HCT116 (cell line): ENCODE measurements at regions of chr4 and their contacts with region 1.

Region 1: GRCh38 chr4:7929118-7929951 is 10.3 kb downstream of the AFAP1 start:
- DNase-seq: peak; percentile 34
- ATAC-seq: peak; percentile 95
- H3K4me3 ChIP-seq: peak overlapping the region in 1 of 2 experiments; percentile 30; a peak in 1 of 4 replicates
- H3K27ac ChIP-seq: peak overlapping the region; percentile 1; the same call in 1 of the 2 replicates
- H3K4me1 ChIP-seq: peaks cover 23 to 30% of the 10 kb centered on the region in 2 experiments
- H3K27me3 ChIP-seq: no peaks in the 10 kb centered on the region
- CTCF ChIP-seq: peak; percentile 25 to 49 (median 44); a peak in 4 of 6 replicates
- POLR2A ChIP-seq: no peak
- RAD21 ChIP-seq: peak; percentile 73

Region 2: DNA sequence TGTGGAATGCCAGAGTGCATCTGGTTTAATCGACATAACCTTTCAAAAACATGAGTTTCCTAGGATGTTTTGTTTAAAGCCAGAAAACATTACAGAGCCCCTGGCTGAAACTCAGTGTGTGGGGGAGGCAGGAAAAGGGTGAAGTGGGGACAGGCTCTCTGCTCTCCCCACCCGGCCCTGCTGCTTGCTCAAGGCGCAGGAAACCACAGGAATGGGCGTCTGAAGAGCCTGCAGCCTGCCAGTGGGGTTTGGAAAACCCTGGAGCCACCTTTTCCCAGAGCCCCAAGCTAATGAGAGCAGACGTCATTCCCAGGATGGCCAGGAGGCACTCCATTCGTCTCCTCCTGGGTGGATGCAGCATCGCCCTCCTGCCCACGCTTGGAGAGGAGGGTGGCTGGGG is 230.3 kb before region 1 on chr4:
- CTCF ChIA-PET with region 1: no interaction called
- POLR2A ChIA-PET with region 1: no interaction called
- RAD21 ChIA-PET with region 1: no interaction called
- intact Hi-C with region 1: no loop called
- DNase-seq: no peak
- ATAC-seq: no peak
- H3K4me3 ChIP-seq: no peak overlapping the region
- H3K27ac ChIP-seq: no peak overlapping the region
- H3K4me1 ChIP-seq: peaks cover 10 to 20% of the 10 kb centered on the region in 2 experiments; a peak in 3 of 4 replicates
- H3K27me3 ChIP-seq: 0 out of 2 replicates have a peak, but pooled peaks cover 2% of the 10 kb centered on the region
- CTCF ChIP-seq: no peak
- POLR2A ChIP-seq: no peak
- RAD21 ChIP-seq: no peak

Region 3: DNA sequence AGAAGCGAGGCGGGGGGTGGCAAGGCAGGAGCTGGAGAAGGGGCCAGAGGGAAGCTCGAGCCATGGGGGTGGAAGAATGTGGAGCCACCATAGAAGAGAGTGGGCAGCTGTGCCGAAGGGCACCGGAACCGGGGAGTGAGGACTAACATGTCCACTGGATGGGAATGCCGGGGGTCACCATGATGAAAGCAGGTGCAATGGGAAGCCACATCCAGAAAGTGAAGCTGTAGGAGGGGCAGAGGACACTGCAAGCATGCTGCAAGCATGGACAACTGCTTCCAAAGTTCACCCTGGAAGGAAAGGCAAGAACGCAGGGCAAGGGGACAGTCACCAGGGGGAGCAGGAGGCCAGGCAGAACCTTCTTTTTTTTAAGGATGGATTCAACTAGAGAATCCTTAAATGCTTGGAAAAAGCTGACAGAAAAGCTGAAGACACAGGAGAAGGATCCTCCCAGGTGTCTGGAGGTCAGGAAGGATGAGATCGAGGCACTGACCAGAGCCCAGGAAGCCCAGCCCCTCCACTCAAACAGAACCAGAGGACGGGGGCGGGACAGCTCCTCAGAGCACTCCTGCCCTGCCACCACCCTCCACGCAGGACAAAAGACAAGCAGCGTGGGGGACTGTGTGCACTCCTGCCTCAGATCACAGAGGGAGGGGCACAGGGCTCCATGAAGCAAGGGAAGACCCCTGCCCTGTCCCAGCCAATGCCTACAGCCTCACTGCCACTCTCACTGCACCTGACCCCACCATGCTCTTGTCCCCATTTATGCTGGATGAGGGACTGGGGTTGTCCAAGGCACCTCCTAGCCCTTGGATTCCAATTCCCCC is 158.9 kb before region 1 on chr4:
- CTCF ChIA-PET with region 1: no interaction called
- POLR2A ChIA-PET with region 1: no interaction called
- RAD21 ChIA-PET with region 1: no interaction called
- intact Hi-C with region 1: loop called (anchors 1 kb)
- DNase-seq: no peak
- ATAC-seq: peak; percentile 73
- H3K4me3 ChIP-seq: no peak overlapping the region
- H3K27ac ChIP-seq: no peak overlapping the region
- H3K4me1 ChIP-seq: no peaks in the 10 kb centered on the region
- H3K27me3 ChIP-seq: no peaks in the 10 kb centered on the region
- CTCF ChIP-seq: peak; percentile 46 to 65 (median 62); a peak in 5 of 6 replicates
- POLR2A ChIP-seq: no peak
- RAD21 ChIP-seq: peak; percentile 56

Region 4: DNA sequence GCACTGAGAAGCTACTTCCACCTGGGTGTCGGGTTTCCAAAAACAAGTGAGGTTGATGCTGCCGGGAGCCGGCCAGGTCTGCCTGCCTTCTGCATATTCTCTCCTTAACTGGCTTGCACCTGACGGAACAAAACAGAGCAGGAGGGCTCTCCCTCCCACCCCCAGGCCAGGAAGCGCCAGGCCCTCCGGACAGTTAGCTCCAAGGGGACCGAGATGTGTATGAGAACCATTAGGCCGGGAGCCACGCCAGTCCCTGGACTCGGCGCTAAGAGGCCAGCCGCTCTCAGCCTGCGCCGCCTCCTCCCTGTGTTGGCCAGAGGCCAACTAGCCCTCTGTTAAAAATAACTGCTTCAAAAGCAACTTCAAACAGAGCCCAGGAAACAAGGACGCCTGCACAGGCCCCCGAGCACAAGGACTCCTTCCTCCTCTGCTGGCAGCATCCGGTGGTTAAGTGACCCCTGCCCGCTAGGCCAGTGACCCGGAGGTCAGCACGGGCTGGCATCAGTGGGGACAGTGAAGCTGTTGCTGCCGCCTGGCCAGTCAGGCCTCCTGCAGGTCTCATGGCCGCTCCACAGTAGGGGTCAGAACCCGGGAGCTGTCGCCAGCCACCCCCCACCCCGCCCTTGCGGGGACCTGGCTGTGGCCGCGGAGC is 121.3 kb after region 1 on chr4:
- CTCF ChIA-PET with region 1: no interaction called
- POLR2A ChIA-PET with region 1: no interaction called
- RAD21 ChIA-PET with region 1: no interaction called
- intact Hi-C with region 1: no loop called
- DNase-seq: no peak
- ATAC-seq: no peak
- H3K4me3 ChIP-seq: no peak overlapping the region
- H3K27ac ChIP-seq: no peak overlapping the region; the same call in 1 of the 2 replicates
- H3K4me1 ChIP-seq: no peaks in the 10 kb centered on the region; a peak in 1 of 4 replicates
- H3K27me3 ChIP-seq: no peaks in the 10 kb centered on the region
- CTCF ChIP-seq: no peak
- POLR2A ChIP-seq: no peak
- RAD21 ChIP-seq: no peak

Region 5: GRCh38 chr4:8340781-8341241 is 411.5 kb after region 1 on chr4:
- CTCF ChIA-PET with region 1: no interaction called
- POLR2A ChIA-PET with region 1: no interaction called
- RAD21 ChIA-PET with region 1: no interaction called
- intact Hi-C with region 1: no loop called
- DNase-seq: no peak
- ATAC-seq: no peak
- H3K4me3 ChIP-seq: no peak overlapping the region
- H3K27ac ChIP-seq: no peak overlapping the region
- H3K4me1 ChIP-seq: peaks cover 0 to 4% of the 10 kb centered on the region in 2 experiments; a peak in 1 of 4 replicates
- H3K27me3 ChIP-seq: no peaks in the 10 kb centered on the region
- CTCF ChIP-seq: no peak
- POLR2A ChIP-seq: no peak
- RAD21 ChIP-seq: no peak